ENCODE measurements at regions of chr22 and their contacts with region 1.

Region 1: GRCh38 chr22:37817705-37818408 is 5.3 kb upstream of the GALR3 start:
- DNase-seq: peak; percentile 65
- H3K4me3 ChIP-seq: peak overlapping the region; percentile 12 to 23
- H3K27ac ChIP-seq: peak overlapping the region in 1 of 2 donors; percentile 45
- H3K4me1 ChIP-seq: peaks cover 8% of the 10 kb centered on the region
- H3K27me3 ChIP-seq: no peaks in the 10 kb centered on the region
- CTCF ChIP-seq: peak; percentile 86 to 97 (median 95)
- POLR2A ChIP-seq: no peak

Region 2: DNA sequence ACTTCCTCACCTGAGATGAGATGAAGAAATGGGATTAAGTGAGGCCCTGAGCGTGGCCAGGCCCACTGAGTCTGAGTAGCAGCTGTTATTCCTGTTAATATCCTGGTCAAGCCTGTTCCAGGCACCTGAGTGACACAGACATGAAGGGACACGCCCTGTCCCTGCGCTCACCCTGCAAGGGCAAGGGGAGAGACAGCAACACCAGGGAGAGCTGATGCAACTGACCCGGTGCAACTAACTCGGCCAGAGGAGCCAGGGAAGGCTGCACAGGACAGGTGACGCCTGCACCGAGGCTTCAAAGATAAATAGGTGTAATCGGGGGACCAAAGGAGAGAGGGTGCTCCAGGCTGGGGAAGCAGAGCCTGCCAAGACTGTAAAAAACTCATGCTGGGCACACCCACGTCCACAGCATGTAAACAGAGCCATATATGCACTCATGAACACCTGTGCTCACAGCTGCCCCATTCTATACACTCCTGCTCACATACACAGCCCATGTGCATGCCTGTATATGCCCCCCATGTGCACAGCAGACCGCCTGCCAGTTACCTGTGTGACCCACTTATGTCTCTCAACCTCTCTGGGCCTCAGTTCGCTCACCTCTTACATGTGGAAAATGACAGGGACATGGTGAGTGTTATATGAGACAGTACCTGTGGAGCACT is 32.9 kb before region 1 on chr22:
- intact Hi-C with region 1: no loop called
- DNase-seq: peak; percentile 88
- H3K4me3 ChIP-seq: no peak overlapping the region
- H3K27ac ChIP-seq: peak overlapping the region; percentile 70 to 75
- H3K4me1 ChIP-seq: peaks cover 12% of the 10 kb centered on the region
- H3K27me3 ChIP-seq: no peaks in the 10 kb centered on the region
- CTCF ChIP-seq: no peak
- POLR2A ChIP-seq: peak; percentile 13

Region 3: DNA sequence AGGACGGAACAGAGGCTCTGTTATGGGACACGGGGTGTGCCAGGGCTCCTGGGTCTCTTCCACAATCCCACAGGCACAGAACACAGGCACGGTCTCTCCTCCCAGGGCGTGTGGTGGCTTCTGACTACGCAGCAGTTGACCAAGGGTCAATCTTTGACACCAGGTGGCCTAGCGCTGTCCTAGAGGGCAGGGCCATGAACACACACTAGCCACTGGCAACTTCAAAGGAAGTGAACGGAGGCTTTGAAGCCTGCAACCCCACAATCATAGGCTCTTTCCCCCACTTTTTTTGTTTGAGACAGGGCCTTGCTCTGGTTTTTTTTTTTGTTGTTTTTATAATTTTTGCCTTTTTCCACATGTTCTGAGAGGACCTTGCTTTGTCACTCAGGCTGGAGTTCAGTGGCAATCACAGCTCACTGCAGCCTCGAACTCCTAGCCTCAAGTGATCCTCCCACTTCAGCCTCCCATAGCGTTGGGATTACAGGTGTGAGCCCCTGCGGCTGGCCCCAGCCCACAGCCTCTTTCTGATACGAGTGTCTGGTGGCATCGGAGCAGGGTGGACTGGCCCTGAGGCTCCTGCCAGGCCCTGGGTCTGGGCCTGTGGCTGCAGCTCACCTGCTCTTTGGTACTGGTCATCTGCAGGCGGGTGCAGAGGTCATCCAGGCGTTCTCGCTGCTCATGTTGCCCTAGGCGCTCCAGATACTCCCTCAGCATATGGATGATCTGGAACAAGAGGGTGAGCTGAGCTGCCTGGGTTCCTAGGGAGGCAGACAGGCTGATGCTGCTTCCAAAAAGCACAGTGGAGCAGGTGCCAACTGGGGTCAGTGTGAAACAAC is 14.4 kb after region 1 on chr22:
- intact Hi-C with region 1: no loop called
- DNase-seq: no peak
- H3K4me3 ChIP-seq: no peak overlapping the region
- H3K27ac ChIP-seq: no peak overlapping the region
- H3K4me1 ChIP-seq: no peaks in the 10 kb centered on the region
- H3K27me3 ChIP-seq: no peaks in the 10 kb centered on the region
- CTCF ChIP-seq: no peak
- POLR2A ChIP-seq: no peak

Region 4: DNA sequence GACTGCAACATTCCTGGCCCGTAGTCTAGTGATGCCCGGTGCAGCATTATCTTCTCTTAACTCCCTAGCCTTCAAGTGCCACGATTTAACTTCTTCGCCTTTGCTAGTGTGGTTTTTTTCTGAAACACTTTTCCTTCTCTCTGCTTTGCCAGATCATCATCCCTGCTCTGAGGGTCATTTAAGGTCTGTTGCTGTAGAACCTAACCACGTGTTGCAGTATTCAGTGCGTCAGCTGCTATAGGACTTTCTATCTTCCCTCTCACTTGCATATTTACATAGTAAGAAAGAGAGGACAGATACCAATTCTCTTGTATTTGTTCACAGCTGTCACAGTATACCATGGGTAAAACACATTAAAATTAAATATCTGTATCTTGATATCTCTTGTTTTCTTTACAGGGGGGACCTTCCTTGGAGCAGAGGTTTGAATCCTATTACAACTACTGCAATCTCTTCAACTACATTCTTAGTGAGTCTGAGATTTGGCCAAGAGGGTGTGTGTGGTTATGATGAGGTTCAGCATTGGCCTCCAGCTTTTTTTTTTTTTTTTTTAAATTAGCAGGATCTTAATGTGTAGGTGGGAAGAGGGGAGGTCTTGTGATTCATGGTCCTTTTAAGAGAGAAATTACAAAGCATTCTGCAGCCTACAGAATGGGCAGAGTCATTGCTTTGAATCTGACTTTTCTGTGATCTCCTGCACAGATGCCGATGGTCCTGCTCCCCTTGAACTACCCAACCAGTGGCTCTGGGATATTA is 44.9 kb after region 1 on chr22:
- intact Hi-C with region 1: loop called (anchors 1 kb)
- DNase-seq: no peak
- H3K4me3 ChIP-seq: no peak overlapping the region
- H3K27ac ChIP-seq: no peak overlapping the region
- H3K4me1 ChIP-seq: no peaks in the 10 kb centered on the region
- H3K27me3 ChIP-seq: no peaks in the 10 kb centered on the region
- CTCF ChIP-seq: no peak
- POLR2A ChIP-seq: no peak

Region 5: DNA sequence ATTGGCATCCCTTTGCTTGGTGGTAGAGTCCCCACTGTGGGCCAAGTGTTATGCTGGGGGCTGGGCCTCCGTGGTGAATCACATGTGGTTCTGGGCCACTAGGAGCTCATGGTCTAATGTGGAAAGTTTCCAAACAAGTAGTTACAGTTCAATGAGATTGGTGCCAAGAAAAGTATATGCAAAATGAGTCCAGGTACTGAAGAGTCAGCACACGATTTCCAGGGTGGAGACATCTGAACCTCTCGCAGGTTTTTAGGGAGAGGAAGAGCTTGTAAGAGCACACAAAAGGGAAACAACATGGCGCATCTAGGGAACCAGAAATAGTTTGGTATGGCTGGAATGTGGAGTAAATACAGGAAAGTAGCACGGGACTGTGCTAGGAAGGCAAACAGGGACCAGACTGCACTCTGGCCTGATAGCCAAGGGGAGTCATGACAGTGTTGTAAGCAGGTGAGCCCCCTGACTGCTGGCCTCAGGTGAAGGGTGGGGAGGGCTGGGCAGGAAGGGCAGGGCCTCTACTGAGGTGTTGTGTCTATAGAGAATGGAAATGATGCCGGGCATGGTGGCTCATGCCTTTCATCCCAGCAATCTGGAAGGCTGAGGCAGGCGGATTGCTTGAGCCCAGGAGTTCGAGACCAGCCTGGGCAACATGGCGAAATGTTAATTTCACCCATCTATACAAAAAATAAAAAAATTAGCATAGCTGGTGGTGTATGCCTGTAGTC is 148.2 kb after region 1 on chr22:
- intact Hi-C with region 1: loop called (anchors 2 kb)
- DNase-seq: no peak
- H3K4me3 ChIP-seq: no peak overlapping the region
- H3K27ac ChIP-seq: no peak overlapping the region
- H3K4me1 ChIP-seq: no peaks in the 10 kb centered on the region
- H3K27me3 ChIP-seq: no peaks in the 10 kb centered on the region
- CTCF ChIP-seq: no peak
- POLR2A ChIP-seq: no peak